ENCODE measurements at regions of chr3 and their contacts with region 1.

Region 1: DNA sequence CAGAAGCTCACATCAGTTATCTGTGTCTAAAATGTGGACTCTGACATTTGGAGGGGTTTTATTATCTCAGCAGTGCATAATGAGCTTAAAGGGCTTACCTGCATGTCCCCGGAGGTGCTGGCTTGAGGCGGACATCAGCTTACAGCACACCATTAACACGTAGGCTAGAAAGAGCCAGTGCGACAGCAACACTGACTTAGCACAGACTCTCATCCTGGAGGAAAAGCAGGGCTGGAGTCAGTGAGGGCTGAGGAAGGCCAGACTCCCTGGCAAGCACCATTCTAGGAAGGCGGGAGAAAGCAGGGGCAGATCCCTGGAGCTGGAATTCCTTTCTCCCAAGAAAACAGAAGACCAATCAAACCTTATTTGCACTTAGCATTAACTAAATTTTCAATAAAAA is 51.7 kb downstream of the TAFA4 start:
- DNase-seq: peak in 1 of 2 donors; percentile 4
- ATAC-seq: no peak

Region 2: DNA sequence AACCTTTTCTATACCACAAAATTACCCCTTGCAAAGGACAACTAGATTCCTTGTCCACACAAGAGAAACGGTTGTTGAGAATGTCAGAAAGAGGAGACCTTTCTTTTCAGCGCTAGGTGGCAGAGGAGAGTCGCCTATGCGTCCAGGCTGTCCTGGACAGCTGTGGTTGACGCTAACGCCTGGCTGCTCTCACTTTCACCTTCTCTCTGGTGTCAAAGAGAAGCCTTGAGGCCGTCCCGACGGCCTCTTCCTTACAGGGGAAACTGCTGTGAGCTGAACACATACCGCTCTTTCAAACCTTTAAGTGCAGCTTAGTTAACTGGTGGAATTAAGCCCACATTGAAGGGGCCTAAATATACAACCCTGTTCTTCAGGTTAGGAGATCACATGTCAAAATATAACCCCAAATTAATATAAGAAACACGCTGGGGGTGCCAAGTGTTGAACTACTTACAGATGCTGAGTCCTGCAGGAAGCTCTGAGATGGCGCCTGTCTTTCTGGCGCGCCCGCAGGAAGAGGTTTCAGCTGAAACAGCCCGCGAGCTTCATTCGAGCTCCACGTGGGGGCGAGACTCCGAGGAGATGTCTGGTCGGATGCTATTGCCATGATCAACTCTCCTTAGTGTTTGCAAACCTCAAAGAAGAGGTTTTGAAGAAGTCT is 1908.6 kb before region 1 on chr3:
- intact Hi-C with region 1: loop called in 1 of 2 experiments (anchors 10 kb)
- DNase-seq: peak; percentile 78
- ATAC-seq: peak; percentile 100

Region 3: DNA sequence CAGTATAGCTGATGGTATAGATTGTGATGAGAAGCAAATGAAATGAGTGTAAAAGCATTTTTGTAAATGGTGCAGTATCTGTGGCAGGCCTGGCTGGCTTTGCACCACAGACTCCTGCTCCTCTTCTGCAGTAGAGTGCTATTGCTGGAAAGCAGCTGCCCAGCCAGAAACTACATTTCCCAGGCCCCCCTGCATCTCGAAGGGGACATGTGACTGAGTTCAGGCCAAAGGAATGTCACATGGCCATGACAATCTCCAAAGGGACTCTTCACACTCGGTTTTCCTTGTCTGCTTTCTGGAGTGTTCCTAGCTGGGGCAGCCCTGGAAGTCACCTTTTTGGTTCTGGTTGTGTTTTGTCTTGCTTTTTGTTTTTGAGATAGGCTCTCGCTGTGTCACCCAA is 1503.3 kb before region 1 on chr3:
- intact Hi-C with region 1: loop called in 1 of 2 experiments (anchors 10 kb)
- DNase-seq: no peak
- ATAC-seq: no peak